ENCODE measurements at regions of chr15 and their contacts with region 1.

Region 1: DNA sequence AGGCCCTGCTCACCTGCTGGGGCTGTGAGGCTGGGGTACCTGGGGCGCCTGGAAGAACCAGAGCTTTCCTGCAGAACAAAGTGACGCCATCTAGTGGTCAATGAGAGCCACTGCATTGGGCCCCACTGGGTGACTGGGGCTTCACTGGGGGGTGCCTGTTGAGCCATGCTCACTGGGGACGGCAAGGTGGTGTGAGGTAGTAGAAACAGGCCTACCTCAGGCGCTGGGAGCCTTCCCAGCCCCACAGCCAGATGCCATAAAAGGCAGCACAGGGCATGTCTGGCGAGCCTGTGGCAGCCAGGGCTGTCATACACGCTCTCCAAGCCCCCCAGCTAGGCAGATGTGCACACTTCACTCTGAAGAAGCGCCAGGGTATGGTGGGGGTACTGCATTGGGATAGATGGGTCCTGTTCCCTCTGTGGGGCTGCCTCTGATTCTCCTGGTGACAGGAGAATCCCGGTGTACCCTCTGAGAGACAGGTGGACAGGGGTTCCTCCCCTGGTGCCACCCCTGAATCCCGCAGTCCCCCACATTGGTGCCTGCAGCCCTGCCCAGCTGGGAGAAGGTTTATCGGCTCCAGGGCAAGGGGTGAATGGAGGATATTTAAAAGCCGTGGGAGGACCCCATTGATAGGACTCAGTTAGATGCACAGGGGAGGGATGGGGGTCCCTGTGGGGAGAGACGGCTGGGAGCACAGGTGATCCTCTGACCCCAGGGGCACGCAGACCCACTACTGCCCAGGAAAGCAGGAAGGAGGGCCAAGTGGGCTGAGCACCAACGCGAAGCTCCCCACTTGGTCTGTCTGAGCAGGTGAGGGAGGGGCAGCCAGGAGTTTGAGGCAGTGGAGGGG is 178.8 kb downstream of the NSMCE3 start:
- DNase-seq: peak; percentile 78
- ATAC-seq: peak; percentile 73
- H3K4me3 Mint-ChIP-seq: peak overlapping the region; percentile 68
- H3K27ac Mint-ChIP-seq: peak overlapping the region; percentile 91
- H3K4me1 Mint-ChIP-seq: peaks cover 27% of the 10 kb centered on the region
- H3K27me3 Mint-ChIP-seq: no peaks in the 10 kb centered on the region

Region 2: GRCh38 chr15:28921919-28922706 is 168.7 kb before region 1 on chr15:
- CTCF ChIA-PET with region 1: interaction called, 10 read pairs
- DNase-seq: no peak
- ATAC-seq: no peak
- H3K4me3 Mint-ChIP-seq: no peak overlapping the region
- H3K27ac Mint-ChIP-seq: no peak overlapping the region
- H3K4me1 Mint-ChIP-seq: peaks cover 55% of the 10 kb centered on the region
- H3K27me3 Mint-ChIP-seq: peaks cover 3% of the 10 kb centered on the region

Region 3: DNA sequence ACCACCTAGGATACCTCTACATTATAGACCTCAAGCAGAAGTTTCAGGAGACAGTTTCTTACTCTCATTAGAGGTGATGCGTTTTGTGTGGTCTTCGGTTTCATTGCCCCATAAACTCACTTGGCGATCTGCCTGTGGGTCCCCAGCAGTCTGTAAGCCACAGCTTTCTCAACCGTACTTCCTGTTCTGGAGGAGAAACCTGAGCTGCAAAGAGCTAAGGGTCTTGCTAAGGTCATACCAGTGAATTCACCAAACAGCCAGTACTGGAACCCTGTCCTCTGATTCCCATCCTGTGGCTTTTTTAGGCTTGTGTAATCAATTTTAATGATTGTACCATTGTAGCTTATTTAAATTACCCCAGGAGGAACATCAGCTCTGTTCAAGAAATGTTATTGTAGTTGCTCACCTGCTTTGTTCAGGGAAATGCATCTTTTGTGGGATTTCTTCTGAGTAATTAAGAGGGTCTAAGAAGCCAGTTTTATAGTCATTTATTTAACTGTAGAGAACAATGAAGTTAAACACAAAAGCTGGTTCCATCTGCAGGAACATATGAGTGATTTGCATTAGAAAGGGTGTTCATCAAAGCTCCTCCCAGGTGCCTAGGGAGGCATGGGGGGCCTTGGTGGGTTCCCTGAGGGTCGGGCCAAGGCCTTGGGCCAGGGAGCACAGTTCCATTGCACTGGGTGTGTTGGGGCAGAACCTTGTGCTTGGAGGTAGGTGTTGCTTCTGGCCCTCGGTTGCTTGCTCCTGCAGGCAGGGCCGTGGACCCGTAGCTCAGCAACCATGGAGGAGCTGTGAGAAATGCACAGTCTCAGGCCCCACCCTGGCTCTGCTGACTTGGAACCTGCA is 135.5 kb before region 1 on chr15:
- CTCF ChIA-PET with region 1: interaction called, 12 read pairs
- DNase-seq: peak; percentile 69
- ATAC-seq: peak; percentile 72
- H3K4me3 Mint-ChIP-seq: no peak overlapping the region
- H3K27ac Mint-ChIP-seq: peak overlapping the region; percentile 69
- H3K4me1 Mint-ChIP-seq: peaks cover 35% of the 10 kb centered on the region
- H3K27me3 Mint-ChIP-seq: peaks cover 22% of the 10 kb centered on the region

Region 4: DNA sequence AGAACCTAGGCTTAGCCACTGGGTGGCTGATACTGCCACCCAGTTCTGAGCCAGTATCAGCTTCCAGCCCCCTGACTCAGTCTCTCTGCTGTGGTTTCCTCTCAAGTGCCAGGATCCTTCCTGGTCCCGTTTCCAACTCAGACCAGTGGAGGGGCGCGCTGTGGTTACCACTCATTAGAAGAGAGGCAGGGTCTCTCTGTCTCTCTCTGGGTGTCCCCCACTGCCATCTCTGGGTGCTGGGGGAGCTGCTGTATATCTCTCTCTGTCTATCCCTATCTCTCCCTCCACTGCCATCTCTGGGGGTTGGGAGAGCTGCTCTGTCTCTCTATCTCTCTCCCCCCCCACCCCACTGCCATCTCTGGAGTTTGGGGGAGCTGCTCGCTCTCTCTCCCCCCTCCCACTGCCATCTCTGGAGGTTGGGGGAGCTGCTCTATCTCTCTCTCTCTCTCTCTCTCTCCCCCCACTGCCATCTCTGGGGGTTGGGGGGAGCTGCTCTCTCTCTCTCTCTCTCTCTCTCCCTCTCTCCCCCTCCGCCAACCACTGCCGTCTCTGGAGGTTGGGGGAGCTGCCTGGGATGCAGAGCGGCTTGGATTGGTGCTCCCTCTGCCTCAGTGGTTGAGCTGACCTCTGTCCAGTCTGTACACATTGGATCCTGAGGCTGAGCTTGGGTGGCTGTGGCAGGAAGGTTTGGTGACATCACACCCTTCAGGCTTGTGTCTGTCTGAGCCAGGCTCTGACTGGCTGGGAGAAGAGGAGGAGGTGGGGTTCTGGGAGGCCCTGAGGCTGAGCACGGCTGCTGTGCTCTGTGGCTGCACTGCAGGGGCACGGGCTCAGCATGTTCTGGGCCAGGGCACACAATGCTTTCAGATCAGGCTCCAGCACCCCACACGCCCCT is 106.2 kb before region 1 on chr15:
- CTCF ChIA-PET with region 1: interaction called, 24 read pairs
- DNase-seq: peak; percentile 67
- ATAC-seq: peak; percentile 97
- H3K4me3 Mint-ChIP-seq: no peak overlapping the region
- H3K27ac Mint-ChIP-seq: peak overlapping the region; percentile 75
- H3K4me1 Mint-ChIP-seq: peaks cover 22% of the 10 kb centered on the region
- H3K27me3 Mint-ChIP-seq: no peaks in the 10 kb centered on the region

Region 5: DNA sequence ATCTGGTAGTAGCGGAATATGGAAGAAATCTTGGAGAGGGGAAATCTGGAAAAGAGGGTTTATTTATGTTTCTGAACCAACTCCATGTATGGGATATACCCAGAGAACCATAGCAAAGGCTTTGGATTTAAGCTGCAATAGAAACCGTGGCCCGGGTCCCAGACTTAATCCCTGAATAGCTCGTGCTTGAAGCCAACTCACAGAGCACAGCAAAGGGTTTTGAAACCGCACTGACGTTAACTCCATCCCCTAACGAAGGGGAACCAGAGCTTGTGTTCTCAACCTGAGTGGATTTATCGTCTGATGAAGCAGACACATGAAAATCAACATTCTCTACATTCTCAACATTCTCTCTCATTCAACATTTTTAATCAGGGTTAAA is 50.5 kb before region 1 on chr15:
- CTCF ChIA-PET with region 1: interaction called, 21 read pairs
- DNase-seq: peak; percentile 38
- ATAC-seq: no peak
- H3K4me3 Mint-ChIP-seq: no peak overlapping the region
- H3K27ac Mint-ChIP-seq: peak overlapping the region; percentile 48
- H3K4me1 Mint-ChIP-seq: peaks cover 43% of the 10 kb centered on the region
- H3K27me3 Mint-ChIP-seq: no peaks in the 10 kb centered on the region

Region 6: GRCh38 chr15:29103824-29104565 is 13.2 kb after region 1 on chr15:
- CTCF ChIA-PET with region 1: interaction called, 78 read pairs
- DNase-seq: peak; percentile 62
- ATAC-seq: peak; percentile 85
- H3K4me3 Mint-ChIP-seq: no peak overlapping the region
- H3K27ac Mint-ChIP-seq: peak overlapping the region; percentile 15
- H3K4me1 Mint-ChIP-seq: peaks cover 2% of the 10 kb centered on the region
- H3K27me3 Mint-ChIP-seq: no peaks in the 10 kb centered on the region

Region 7: GRCh38 chr15:29162411-29162810 is 71.6 kb after region 1 on chr15:
- CTCF ChIA-PET with region 1: no interaction called
- DNase-seq: no peak
- ATAC-seq: no peak
- H3K4me3 Mint-ChIP-seq: no peak overlapping the region
- H3K27ac Mint-ChIP-seq: no peak overlapping the region
- H3K4me1 Mint-ChIP-seq: peaks cover 11% of the 10 kb centered on the region
- H3K27me3 Mint-ChIP-seq: peaks cover 59% of the 10 kb centered on the region